IMR-90 (cell line): ENCODE measurements at regions of chr15 and their contacts with region 1.

Region 1: DNA sequence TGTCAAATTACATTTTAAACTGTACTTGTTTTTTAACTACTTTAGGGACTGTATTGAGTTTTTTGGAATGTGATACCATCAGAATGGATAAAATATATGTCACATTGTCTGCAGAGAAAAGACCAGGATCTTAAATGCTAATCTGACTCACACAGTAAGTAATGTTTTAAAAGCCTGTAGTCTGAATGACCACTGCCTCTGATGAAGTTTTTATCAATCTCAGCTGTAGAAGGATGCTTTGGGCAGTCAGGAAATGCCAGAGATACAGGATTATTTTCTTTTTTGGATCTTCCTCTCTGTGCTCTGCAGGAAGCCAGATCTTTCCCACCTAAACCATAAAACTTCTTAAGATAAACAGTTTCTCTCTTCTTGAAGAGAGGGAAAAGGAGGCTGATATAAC is 73.1 kb upstream of the PRTG start:
- DNase-seq: peak; percentile 48
- ATAC-seq: peak; percentile 60; the same call in 1 of the 2 replicates
- H3K4me3 ChIP-seq: no peak overlapping the region
- H3K27ac ChIP-seq: no peak overlapping the region
- H3K4me1 ChIP-seq: no peaks in the 10 kb centered on the region; the same call in 1 of the 2 replicates
- H3K27me3 ChIP-seq: no peaks in the 10 kb centered on the region; the same call in 1 of the 2 replicates
- CTCF ChIP-seq: no peak
- POLR2A ChIP-seq: no peak
- RAD21 ChIP-seq: no peak

Region 2: GRCh38 chr15:55884223-55884622 is 68.2 kb after region 1 on chr15:
- CTCF ChIA-PET with region 1: no interaction called
- POLR2A ChIA-PET with region 1: interaction called, 13 read pairs
- dilution Hi-C with region 1: no loop called
- in situ Hi-C with region 1: no loop called
- intact Hi-C with region 1: no loop called
- DNase-seq: peak; percentile 29
- ATAC-seq: no peak
- H3K4me3 ChIP-seq: no peak overlapping the region
- H3K27ac ChIP-seq: no peak overlapping the region
- H3K4me1 ChIP-seq: no peaks in the 10 kb centered on the region
- H3K27me3 ChIP-seq: no peaks in the 10 kb centered on the region
- CTCF ChIP-seq: no peak
- POLR2A ChIP-seq: no peak
- RAD21 ChIP-seq: no peak

Region 3: DNA sequence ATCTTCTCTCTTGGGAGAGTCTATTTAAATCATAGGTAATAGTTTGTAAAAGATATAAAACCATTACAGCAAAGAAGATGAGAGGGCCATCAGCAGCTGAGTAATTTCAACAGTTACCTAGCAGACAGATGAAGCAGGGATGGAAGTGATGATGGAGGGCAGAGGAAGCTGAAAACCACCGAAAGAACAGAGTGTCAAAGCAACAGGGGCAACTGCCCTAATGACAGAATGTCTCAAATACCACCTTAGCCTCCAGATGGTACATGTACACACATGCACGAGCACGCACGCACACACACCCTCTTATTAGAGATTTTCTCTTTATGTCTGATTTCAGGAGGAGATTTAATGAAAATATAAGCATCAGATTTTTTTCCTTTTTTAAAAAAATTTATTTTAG is 112.9 kb after region 1 on chr15:
- CTCF ChIA-PET with region 1: no interaction called
- POLR2A ChIA-PET with region 1: no interaction called
- dilution Hi-C with region 1: no loop called
- in situ Hi-C with region 1: no loop called
- intact Hi-C with region 1: no loop called
- DNase-seq: no peak
- ATAC-seq: no peak
- H3K4me3 ChIP-seq: no peak overlapping the region
- H3K27ac ChIP-seq: no peak overlapping the region
- H3K4me1 ChIP-seq: no peaks in the 10 kb centered on the region
- H3K27me3 ChIP-seq: no peaks in the 10 kb centered on the region
- CTCF ChIP-seq: no peak
- POLR2A ChIP-seq: no peak
- RAD21 ChIP-seq: no peak